Mammary epithelial cell (primary cell): ENCODE measurements at regions of chr16 and their contacts with region 1.

Region 1: DNA sequence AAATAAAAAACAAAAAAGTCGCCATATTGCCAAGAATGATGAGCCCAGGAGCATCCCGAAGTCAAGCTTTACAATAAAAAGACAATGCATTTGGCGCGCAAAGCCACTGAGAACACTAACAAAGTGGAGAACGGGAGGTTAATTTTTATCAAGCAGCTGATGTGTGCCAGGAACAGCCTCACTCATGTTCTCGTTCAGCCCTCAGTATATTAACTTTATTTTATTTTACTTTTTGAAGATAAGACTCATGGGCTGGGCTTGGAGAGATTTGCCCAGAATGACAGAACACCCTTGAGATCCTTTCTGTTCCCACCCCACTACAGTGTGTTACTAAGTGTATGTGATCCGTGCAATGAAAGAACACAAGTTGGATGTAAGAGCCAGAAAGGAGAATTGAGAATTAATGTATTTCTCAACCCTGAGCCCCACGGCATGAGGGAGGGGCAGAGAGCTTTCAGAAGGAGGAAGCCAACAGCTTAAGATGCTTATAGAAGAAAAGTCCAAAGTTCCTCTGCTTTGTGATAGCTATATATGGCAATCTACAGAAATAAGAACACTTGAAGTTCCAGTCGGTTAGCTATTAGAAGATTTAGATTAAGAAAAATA is 48.4 kb downstream of the COTL1 start:
- DNase-seq: no peak
- H3K4me3 ChIP-seq: no peak overlapping the region
- H3K27ac ChIP-seq: no peak overlapping the region
- H3K4me1 ChIP-seq: no peaks in the 10 kb centered on the region
- H3K27me3 ChIP-seq: no peaks in the 10 kb centered on the region
- CTCF ChIP-seq: no peak

Region 2: GRCh38 chr16:84427553-84427952 is 141.9 kb before region 1 on chr16:
- CTCF ChIA-PET with region 1: no interaction called
- dilution Hi-C with region 1: no loop called
- in situ Hi-C with region 1: no loop called
- intact Hi-C with region 1: no loop called
- DNase-seq: no peak
- H3K4me3 ChIP-seq: no peak overlapping the region
- H3K27ac ChIP-seq: no peak overlapping the region
- H3K4me1 ChIP-seq: no peaks in the 10 kb centered on the region
- H3K27me3 ChIP-seq: no peaks in the 10 kb centered on the region
- CTCF ChIP-seq: no peak

Region 3: DNA sequence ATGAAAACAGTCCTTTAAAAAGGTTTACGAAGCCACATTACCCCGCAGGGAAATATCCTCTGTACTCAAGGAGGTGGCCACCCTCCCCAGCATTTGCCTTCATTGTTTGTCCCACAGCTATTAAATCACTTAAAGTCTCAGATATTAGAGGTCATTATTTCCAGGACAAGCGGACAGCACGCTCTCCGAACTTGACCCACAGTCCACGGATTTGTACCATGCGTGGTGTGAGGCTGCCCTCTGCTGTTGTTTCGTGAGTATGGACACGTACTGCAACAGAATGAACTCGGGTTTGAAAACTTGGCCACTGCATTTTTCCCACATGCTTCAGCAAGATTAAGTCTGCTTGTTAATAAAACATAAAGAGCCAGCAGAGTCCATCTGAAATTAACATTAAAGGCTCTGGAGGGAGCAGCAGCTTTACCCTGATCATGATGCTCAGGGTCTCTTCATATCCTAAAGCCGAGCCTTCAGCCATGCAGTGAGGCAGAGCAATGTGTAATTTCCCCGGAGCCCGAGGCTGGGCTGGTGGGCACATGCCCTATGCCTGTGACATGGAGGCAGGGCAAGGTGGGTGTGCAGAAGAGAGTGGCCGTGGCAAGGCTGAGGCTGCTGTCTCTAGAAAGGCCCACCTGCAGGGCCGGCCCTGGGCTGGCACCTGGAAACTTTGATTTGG is 84.8 kb before region 1 on chr16:
- CTCF ChIA-PET with region 1: no interaction called
- dilution Hi-C with region 1: no loop called
- in situ Hi-C with region 1: no loop called
- intact Hi-C with region 1: no loop called
- DNase-seq: no peak
- H3K4me3 ChIP-seq: no peak overlapping the region
- H3K27ac ChIP-seq: no peak overlapping the region
- H3K4me1 ChIP-seq: peaks cover 11% of the 10 kb centered on the region
- H3K27me3 ChIP-seq: no peaks in the 10 kb centered on the region
- CTCF ChIP-seq: peak; percentile 46 to 67

Region 4: GRCh38 chr16:84544031-84544773 is 25.3 kb before region 1 on chr16:
- CTCF ChIA-PET with region 1: no interaction called
- dilution Hi-C with region 1: no loop called
- in situ Hi-C with region 1: no loop called
- intact Hi-C with region 1: no loop called
- DNase-seq: no peak
- H3K4me3 ChIP-seq: no peak overlapping the region
- H3K27ac ChIP-seq: no peak overlapping the region
- H3K4me1 ChIP-seq: no peaks in the 10 kb centered on the region
- H3K27me3 ChIP-seq: no peaks in the 10 kb centered on the region
- CTCF ChIP-seq: no peak

Region 5: GRCh38 chr16:84555418-84556195 is 13.9 kb before region 1 on chr16:
- CTCF ChIA-PET with region 1: no interaction called
- dilution Hi-C with region 1: no loop called
- in situ Hi-C with region 1: no loop called
- intact Hi-C with region 1: no loop called
- DNase-seq: no peak
- H3K4me3 ChIP-seq: no peak overlapping the region
- H3K27ac ChIP-seq: no peak overlapping the region
- H3K4me1 ChIP-seq: peaks cover 6% of the 10 kb centered on the region
- H3K27me3 ChIP-seq: no peaks in the 10 kb centered on the region
- CTCF ChIP-seq: no peak

Region 6: GRCh38 chr16:84663433-84664101 is 94.1 kb after region 1 on chr16:
- CTCF ChIA-PET with region 1: no interaction called
- dilution Hi-C with region 1: loop called (anchors 5 kb)
- in situ Hi-C with region 1: no loop called
- intact Hi-C with region 1: no loop called
- DNase-seq: no peak
- H3K4me3 ChIP-seq: no peak overlapping the region
- H3K27ac ChIP-seq: no peak overlapping the region
- H3K4me1 ChIP-seq: no peaks in the 10 kb centered on the region
- H3K27me3 ChIP-seq: no peaks in the 10 kb centered on the region
- CTCF ChIP-seq: no peak